ENCODE measurements at regions of chr1 and their contacts with region 1.

Region 1: GRCh38 chr1:109739738-109740660 is 839 bp downstream of the GSTM3 start:
- DNase-seq: peak; percentile 58 to 60
- H3K4me3 ChIP-seq: peak overlapping the region; percentile 45
- H3K4me3 Mint-ChIP-seq: peak overlapping the region; percentile 77
- H3K27ac Mint-ChIP-seq: peak overlapping the region; percentile 66
- H3K4me1 ChIP-seq: no peaks in the 10 kb centered on the region
- H3K4me1 Mint-ChIP-seq: peaks cover 8% of the 10 kb centered on the region
- H3K27me3 ChIP-seq: no peaks in the 10 kb centered on the region
- H3K27me3 Mint-ChIP-seq: no peaks in the 10 kb centered on the region
- CTCF ChIP-seq: no peak

Region 2: DNA sequence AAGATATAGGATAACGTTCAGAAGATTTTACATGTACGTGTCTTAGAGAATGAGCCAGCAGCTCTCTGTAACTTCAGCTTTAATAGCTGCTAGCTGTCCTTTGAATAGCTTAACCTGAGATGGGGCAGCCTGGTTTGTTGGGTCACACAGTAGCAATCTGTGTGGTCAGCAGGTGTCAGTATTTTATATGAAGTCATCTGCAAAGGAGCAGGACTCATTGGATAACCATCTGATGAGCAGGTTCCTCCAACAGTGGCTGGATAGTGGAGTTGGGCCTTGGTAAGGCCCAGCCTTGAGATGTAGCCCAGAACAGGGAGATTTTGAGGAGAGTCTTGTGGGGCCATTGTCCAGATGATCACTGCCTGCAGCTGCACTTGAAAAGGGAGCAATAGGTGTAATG is 21.5 kb before region 1 on chr1:
- CTCF ChIA-PET with region 1: interaction called, 3 read pairs
- POLR2A ChIA-PET with region 1: no interaction called
- intact Hi-C with region 1: loop called (anchors 2 kb)
- DNase-seq: peak; percentile 40 to 52
- H3K4me3 ChIP-seq: no peak overlapping the region
- H3K4me3 Mint-ChIP-seq: no peak overlapping the region
- H3K27ac Mint-ChIP-seq: no peak overlapping the region
- H3K4me1 ChIP-seq: peaks cover 9% of the 10 kb centered on the region
- H3K4me1 Mint-ChIP-seq: peaks cover 7% of the 10 kb centered on the region
- H3K27me3 ChIP-seq: no peaks in the 10 kb centered on the region
- H3K27me3 Mint-ChIP-seq: no peaks in the 10 kb centered on the region
- CTCF ChIP-seq: peak in 1 of 2 experiments; percentile 36

Region 3: GRCh38 chr1:109827466-109827865 is 87.5 kb after region 1 on chr1:
- CTCF ChIA-PET with region 1: no interaction called
- POLR2A ChIA-PET with region 1: no interaction called
- intact Hi-C with region 1: no loop called
- DNase-seq: no peak
- H3K4me3 ChIP-seq: no peak overlapping the region
- H3K4me3 Mint-ChIP-seq: no peak overlapping the region
- H3K27ac Mint-ChIP-seq: no peak overlapping the region
- H3K4me1 ChIP-seq: peaks cover 10% of the 10 kb centered on the region
- H3K4me1 Mint-ChIP-seq: peaks cover 19% of the 10 kb centered on the region
- H3K27me3 ChIP-seq: no peaks in the 10 kb centered on the region
- H3K27me3 Mint-ChIP-seq: no peaks in the 10 kb centered on the region
- CTCF ChIP-seq: no peak

Region 4: DNA sequence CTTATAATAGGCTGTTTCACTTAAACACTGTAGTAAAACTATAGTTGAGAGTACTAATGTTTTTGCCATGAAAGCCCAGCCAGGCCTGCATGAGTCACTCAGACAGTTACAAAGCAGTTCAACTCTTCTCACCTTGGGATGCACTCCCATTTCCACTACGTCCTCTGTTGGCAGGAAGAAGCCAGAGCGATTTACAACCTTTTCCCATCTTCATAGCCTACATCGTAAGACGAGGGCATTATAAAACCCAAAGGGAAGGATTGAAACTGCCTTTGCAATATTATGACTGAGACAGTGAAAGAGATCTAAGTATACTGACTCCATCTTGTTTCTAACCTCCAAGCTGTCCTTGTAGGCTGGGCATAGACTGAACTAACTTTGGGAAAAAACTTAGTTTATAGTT is 98.8 kb after region 1 on chr1:
- CTCF ChIA-PET with region 1: interaction called, 10 read pairs
- POLR2A ChIA-PET with region 1: no interaction called
- intact Hi-C with region 1: no loop called
- DNase-seq: no peak
- H3K4me3 ChIP-seq: no peak overlapping the region
- H3K4me3 Mint-ChIP-seq: no peak overlapping the region
- H3K27ac Mint-ChIP-seq: no peak overlapping the region
- H3K4me1 ChIP-seq: no peaks in the 10 kb centered on the region
- H3K4me1 Mint-ChIP-seq: no peaks in the 10 kb centered on the region
- H3K27me3 ChIP-seq: no peaks in the 10 kb centered on the region
- H3K27me3 Mint-ChIP-seq: no peaks in the 10 kb centered on the region
- CTCF ChIP-seq: no peak

Measured in Caco-2 (cell line).